Ascending aorta (tissue), 2 donors: ENCODE measurements at regions of chr17 and their contacts with region 1.

Region 1: GRCh38 chr17:49763735-49764558 is at the start of gene FAM117A:
- DNase-seq: peak; percentile 96 to 98
- H3K4me3 ChIP-seq: peak within 1 kb of the TSS; percentile 89 to 98
- H3K27ac ChIP-seq: peak within 1 kb of the TSS; percentile 5 to 84
- H3K4me1 ChIP-seq: peaks cover 0 to 5% of the 10 kb centered on the region in 2 donors
- H3K27me3 ChIP-seq: no peaks in the 10 kb centered on the region
- CTCF ChIP-seq: no peak
- total RNA-seq, gene FAM117A: 25.4 TPM

Region 2: GRCh38 chr17:49739641-49740271 is 24.2 kb before region 1 on chr17:
- intact Hi-C with region 1: loop called (anchors 2 kb)
- DNase-seq: peak; percentile 61 to 85
- H3K4me3 ChIP-seq: no peak overlapping the region
- H3K27ac ChIP-seq: peak overlapping the region; percentile 89 to 94
- H3K4me1 ChIP-seq: peaks cover 21 to 46% of the 10 kb centered on the region in 2 donors
- H3K27me3 ChIP-seq: no peaks in the 10 kb centered on the region
- CTCF ChIP-seq: no peak

Region 3: DNA sequence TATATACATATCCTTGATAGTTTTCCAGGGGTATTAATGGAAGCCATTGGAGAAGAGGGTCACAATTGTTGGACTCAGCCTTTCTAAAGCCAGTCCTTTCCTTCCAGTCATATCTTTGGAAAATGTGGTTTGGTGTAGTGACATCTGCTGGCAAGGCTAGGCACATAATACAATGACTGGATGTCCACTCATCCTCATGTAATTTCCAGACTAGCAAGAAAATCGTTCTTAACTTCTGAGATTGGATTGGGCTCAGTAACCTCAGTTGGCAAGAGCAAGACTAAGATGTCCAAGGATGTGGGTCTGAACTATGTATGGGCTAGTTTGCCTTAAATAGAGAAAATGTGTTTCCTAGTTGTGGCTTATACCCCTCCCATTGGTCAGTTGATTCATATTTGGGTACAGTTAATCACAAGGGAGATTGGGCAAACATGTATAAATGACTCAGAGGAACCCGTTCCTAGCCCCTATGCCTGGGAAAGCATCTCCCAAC is 15.8 kb after region 1 on chr17:
- intact Hi-C with region 1: loop called (anchors 1 kb)
- DNase-seq: peak in 1 of 2 donors; percentile 75
- H3K4me3 ChIP-seq: no peak overlapping the region
- H3K27ac ChIP-seq: peak overlapping the region; percentile 81 to 87
- H3K4me1 ChIP-seq: peaks cover 29 to 59% of the 10 kb centered on the region in 2 donors
- H3K27me3 ChIP-seq: no peaks in the 10 kb centered on the region
- CTCF ChIP-seq: peak; percentile 48 to 72 (median 63)

Region 4: DNA sequence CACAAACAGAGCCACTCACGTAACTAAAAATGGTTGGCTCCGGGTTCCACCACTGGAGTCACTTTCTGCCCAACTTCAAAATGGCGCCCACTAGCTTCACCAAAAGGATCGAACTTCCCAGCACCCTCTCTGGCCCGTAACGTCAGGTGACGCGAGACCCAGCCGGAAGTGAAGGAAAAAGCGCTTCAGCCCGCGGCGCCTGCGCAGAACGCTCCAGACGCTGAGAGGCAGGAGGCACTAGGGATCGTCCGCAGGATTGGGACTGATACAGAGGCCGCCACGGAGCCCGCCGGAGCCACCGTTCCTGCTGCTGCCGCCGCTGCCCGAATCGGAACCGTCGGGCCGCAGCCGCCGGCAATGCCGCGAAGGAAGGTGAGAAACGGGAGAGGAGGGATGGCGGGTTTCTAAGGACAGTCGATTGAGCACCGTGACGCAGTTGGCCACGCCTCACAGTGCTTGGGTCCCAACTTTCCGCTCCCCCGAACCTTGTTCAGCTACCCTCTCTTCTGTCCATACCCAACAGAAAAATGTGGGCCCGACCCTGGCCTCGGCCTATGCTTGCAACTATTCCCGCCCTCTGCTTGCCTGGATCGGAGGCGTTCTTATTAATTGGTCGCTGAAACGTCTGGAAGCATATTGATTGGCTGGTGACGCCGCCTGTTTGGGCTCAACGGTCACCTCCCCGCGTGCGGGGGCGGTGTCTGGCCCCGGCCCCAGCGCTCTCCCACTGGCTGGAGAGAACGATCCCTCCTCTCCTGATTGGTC is 24.7 kb after region 1 on chr17 and contains the start of gene KAT7:
- intact Hi-C with region 1: loop called (anchors 1 kb)
- DNase-seq: peak; percentile 98 to 99
- H3K4me3 ChIP-seq: peak within 1 kb of the TSS; percentile 93 to 98
- H3K27ac ChIP-seq: peak within 1 kb of the TSS; percentile 100
- H3K4me1 ChIP-seq: peaks cover 10 to 34% of the 10 kb centered on the region in 2 donors
- H3K27me3 ChIP-seq: no peaks in the 10 kb centered on the region
- CTCF ChIP-seq: no peak
- total RNA-seq, gene KAT7: 46.6 TPM